CD4-positive, alpha-beta memory T cell (primary cell): ENCODE measurements at regions of chr15 and their contacts with region 1.

Region 1: DNA sequence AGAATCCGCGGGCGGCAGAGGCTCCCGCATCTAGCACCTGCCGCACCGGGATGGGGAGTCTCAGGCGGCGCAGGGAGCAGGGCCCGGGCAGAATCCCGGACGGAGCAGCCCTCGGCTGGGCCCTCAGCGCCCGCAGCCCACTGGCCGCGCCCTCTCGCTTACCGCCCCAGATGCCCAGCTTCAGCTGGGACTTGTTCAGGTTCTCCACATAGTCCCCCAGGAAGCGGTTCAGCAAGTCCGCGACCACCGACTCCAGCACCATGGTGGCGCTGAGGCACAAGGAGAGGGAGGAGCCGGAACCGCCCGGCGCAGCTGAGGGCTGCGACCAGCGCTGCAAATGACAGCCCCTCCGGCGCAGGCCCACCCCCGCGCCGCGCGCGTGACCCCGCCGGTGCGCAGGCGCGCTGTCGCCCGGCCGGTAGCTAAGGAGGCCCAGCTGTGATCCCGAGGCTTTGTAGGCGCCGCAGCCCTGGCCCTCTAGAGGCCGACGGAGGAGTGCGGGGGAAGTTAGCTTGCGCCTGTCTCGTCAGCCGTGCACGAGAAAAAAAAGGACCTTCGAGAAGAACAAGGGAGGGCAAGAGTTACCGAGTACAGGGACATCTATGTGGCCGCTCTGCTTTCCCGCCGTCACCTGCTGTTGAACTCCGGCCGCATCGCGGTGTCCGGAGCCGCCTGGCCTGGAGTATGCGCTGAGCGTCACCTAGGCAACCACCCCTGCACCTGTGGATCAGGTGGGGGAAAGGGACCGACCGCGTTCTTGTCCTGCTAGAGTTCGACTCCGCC is at the start of gene VPS13C:
- DNase-seq: peak; percentile 92 to 94 (median 93)
- H3K4me3 ChIP-seq: peak within 1 kb of the TSS; percentile 65 to 94
- H3K4me3 Mint-ChIP-seq: peak within 1 kb of the TSS; percentile 95 to 100 (median 98)
- H3K27ac ChIP-seq: peak within 1 kb of the TSS; percentile 83
- H3K27ac Mint-ChIP-seq: peak within 1 kb of the TSS; percentile 97 to 99 (median 98)
- H3K4me1 ChIP-seq: peaks cover 38% of the 10 kb centered on the region
- H3K4me1 Mint-ChIP-seq: peaks cover 30 to 64% (median 49%) of the 10 kb centered on the region in 4 donors
- H3K27me3 ChIP-seq: no peaks in the 10 kb centered on the region
- H3K27me3 Mint-ChIP-seq: no peaks in the 10 kb centered on the region
- total RNA-seq, gene VPS13C: 144 to 148 TPM

Region 2: DNA sequence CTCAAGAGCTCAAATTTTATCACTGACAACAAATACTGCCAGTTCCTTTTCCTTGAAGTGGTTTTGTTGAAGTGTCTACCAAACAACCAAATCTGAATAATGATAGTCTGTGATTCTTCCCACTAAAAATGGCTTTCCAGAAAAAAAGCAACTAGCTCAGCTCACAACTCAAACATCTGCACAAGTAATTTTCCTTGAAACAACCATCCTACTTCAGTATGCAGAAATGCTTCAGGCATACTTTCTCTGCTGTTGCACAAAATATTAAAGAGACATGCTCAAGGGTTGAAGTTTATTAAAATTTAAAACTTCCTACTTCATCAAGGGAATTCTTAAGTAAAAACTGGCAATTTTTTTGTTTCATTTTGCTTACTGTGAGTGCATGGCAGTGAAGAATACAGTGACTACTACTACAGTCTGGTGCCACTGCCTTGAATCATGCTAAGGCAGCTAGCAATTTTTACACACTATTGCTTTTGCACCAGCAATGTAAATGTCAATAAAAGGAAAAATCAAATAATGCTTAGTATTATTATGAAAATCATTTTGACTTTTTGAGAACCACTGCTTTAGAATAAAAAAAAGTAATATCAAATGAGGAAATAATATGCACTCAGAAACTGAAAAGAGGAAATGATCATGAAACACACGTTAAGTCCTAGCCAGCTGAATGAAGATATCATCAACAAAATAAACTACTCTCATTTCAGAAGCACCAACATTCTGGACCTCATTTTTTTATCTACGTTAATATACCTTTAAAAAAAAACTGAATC is 33.6 kb before region 1 on chr15:
- CTCF ChIA-PET with region 1: interaction called, 5 read pairs
- POLR2A ChIA-PET with region 1: interaction called, 10 read pairs
- intact Hi-C with region 1: loop called (anchors 5 kb)
- DNase-seq: no peak
- H3K4me3 ChIP-seq: no peak overlapping the region
- H3K4me3 Mint-ChIP-seq: no peak overlapping the region
- H3K27ac ChIP-seq: no peak overlapping the region
- H3K27ac Mint-ChIP-seq: no peak overlapping the region
- H3K4me1 ChIP-seq: no peaks in the 10 kb centered on the region
- H3K4me1 Mint-ChIP-seq: peaks cover 4 to 8% (median 5%) of the 10 kb centered on the region in 4 donors
- H3K27me3 ChIP-seq: no peaks in the 10 kb centered on the region
- H3K27me3 Mint-ChIP-seq: no peaks in the 10 kb centered on the region

Region 3: DNA sequence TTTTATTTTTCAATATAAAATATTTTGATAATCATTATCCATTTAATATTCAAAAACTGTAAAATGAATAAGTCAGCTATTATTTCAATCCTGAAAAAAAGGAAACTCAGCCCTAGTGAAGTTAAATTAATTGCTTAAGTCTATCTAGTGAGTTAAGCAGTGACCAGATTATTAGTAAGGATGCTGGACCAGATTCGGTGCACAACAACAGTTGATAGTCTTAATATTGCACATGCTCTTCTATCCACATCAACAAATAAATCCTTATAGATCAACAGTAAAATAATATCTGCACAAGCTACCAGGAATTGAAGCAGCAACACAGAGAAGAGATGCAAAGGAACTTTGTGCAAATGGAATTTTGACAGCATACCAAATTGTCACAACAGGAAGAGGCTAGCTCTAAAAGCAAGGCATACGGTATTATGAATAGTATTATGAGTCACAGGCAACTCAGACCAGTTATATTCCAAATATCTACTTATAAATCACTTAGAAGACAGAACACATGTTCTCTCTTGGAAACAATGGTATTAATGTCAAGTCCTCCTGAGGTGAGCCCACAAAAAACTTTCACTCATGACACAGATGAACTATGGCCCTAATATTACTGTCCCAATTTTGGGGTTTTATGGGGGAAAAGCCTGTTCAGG is 24.9 kb before region 1 on chr15:
- CTCF ChIA-PET with region 1: interaction called, 3 read pairs
- POLR2A ChIA-PET with region 1: interaction called, 10 read pairs
- intact Hi-C with region 1: no loop called
- DNase-seq: no peak
- H3K4me3 ChIP-seq: no peak overlapping the region
- H3K4me3 Mint-ChIP-seq: no peak overlapping the region
- H3K27ac ChIP-seq: no peak overlapping the region
- H3K27ac Mint-ChIP-seq: peak overlapping the region in 3 of 7 donors; percentile 5 to 62 (median 32)
- H3K4me1 ChIP-seq: peaks cover 10% of the 10 kb centered on the region
- H3K4me1 Mint-ChIP-seq: peaks cover 7 to 18% (median 15%) of the 10 kb centered on the region in 4 donors
- H3K27me3 ChIP-seq: no peaks in the 10 kb centered on the region
- H3K27me3 Mint-ChIP-seq: no peaks in the 10 kb centered on the region

Region 4: GRCh38 chr15:62046078-62046743 is 14.1 kb before region 1 on chr15:
- CTCF ChIA-PET with region 1: interaction called, 5 read pairs
- POLR2A ChIA-PET with region 1: interaction called, 8 read pairs
- intact Hi-C with region 1: loop called (anchors 2 kb)
- DNase-seq: no peak
- H3K4me3 ChIP-seq: no peak overlapping the region
- H3K4me3 Mint-ChIP-seq: peak overlapping the region in 6 of 8 donors; percentile 3 to 67 (median 50)
- H3K27ac ChIP-seq: no peak overlapping the region
- H3K27ac Mint-ChIP-seq: peak overlapping the region in 6 of 7 donors; percentile 1 to 75 (median 36)
- H3K4me1 ChIP-seq: peaks cover 32% of the 10 kb centered on the region
- H3K4me1 Mint-ChIP-seq: peaks cover 25 to 46% (median 27%) of the 10 kb centered on the region in 4 donors
- H3K27me3 ChIP-seq: no peaks in the 10 kb centered on the region
- H3K27me3 Mint-ChIP-seq: no peaks in the 10 kb centered on the region

Region 5: DNA sequence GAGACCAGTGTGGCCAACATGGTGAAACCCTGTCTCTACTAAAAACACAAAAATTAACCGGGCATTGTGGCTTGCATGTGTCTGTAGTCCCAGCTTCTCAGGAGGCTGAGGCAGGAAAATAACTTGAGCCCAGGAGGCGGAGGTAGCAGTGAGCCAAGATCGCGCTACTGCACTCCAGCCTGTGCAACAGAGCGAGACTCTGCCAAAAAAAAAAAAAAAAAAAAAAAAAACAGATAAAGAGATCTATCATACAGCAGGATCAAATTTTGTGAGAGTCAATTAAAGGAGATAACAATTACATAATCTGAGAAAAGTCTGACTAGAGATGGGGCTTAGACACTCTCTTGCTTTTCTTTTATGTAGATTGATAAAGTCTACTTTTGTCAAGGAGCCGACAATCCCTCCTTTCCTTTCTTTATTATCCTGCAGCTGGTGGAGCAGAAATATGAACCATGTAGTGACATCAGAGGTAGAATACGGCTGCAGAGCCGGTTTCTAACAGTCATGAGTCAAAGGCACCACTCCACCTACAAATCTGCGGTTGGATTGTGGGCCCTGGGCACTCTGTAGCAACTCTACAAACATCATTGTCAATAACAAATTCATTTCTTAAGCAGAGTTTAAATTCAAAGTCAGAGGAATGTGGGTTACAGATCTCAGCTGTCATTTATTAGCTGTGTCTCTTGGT is 15.4 kb after region 1 on chr15:
- CTCF ChIA-PET with region 1: interaction called, 39 read pairs
- POLR2A ChIA-PET with region 1: interaction called, 4 read pairs
- intact Hi-C with region 1: no loop called
- DNase-seq: no peak
- H3K4me3 ChIP-seq: no peak overlapping the region
- H3K4me3 Mint-ChIP-seq: no peak overlapping the region
- H3K27ac ChIP-seq: no peak overlapping the region
- H3K27ac Mint-ChIP-seq: no peak overlapping the region
- H3K4me1 ChIP-seq: no peaks in the 10 kb centered on the region
- H3K4me1 Mint-ChIP-seq: no peaks in the 10 kb centered on the region
- H3K27me3 ChIP-seq: no peaks in the 10 kb centered on the region
- H3K27me3 Mint-ChIP-seq: peaks cover 0 to 1% of the 10 kb centered on the region in 2 donors

Region 6: GRCh38 chr15:62125773-62126172 is 65.5 kb after region 1 on chr15:
- CTCF ChIA-PET with region 1: interaction called, 7 read pairs
- POLR2A ChIA-PET with region 1: interaction called, 4 read pairs
- intact Hi-C with region 1: loop called (anchors 5 kb)
- DNase-seq: no peak
- H3K4me3 ChIP-seq: no peak overlapping the region
- H3K4me3 Mint-ChIP-seq: peak overlapping the region in 2 of 8 donors; percentile 1 to 33
- H3K27ac ChIP-seq: no peak overlapping the region
- H3K27ac Mint-ChIP-seq: peak overlapping the region; percentile 16 to 82 (median 68)
- H3K4me1 ChIP-seq: peaks cover 67% of the 10 kb centered on the region
- H3K4me1 Mint-ChIP-seq: peaks cover 50 to 75% (median 62%) of the 10 kb centered on the region in 4 donors
- H3K27me3 ChIP-seq: no peaks in the 10 kb centered on the region
- H3K27me3 Mint-ChIP-seq: no peaks in the 10 kb centered on the region